Posterior cingulate gyrus (tissue), 11 donors: ENCODE measurements at regions of chr5 and their contacts with region 1.

Region 1: GRCh38 chr5:79464695-79465332 is 49.1 kb downstream of the HOMER1 start:
- DNase-seq: no peak

Region 2: DNA sequence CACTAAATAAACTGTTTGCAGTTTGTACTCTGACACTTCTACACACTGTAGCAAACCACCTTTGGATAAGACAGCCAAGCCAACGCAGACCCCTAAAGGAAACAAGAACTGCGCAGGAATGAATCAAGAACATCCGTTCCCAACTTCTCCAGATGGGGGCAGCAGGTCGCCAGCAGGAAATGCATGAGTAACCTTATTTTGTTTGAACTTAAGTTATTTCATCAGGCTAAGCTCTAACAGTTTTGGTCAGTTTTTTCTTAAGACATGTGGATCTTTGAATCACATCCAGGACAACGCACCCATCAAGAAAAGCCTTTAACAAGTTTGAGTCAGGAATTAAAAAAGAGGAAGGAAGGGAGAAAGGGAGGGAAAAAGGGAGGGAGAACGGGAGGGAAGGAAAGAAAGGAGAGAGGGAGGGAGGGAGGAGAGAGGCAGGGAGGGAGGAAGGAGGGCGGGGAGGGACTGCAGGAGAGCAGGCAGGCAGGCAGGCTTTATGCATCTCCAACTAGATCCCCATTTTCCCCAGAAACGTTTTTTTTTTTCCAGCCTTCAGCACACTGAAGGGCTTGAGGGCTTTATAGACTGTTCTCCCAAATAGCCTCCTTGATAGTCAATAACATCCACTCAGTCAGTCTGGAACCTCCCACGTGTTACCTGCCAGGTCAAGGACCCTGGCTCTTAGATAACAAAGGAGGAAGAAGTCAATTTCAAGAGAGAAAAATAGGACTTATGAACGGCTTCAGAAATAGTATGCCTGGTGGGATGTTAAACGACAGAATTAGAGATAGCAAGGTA is 331.0 kb before region 1 on chr5:
- intact Hi-C with region 1: loop called (anchors 2 kb)
- DNase-seq: peak in 9 of 10 donors; percentile 38 to 90 (median 61)

Region 3: DNA sequence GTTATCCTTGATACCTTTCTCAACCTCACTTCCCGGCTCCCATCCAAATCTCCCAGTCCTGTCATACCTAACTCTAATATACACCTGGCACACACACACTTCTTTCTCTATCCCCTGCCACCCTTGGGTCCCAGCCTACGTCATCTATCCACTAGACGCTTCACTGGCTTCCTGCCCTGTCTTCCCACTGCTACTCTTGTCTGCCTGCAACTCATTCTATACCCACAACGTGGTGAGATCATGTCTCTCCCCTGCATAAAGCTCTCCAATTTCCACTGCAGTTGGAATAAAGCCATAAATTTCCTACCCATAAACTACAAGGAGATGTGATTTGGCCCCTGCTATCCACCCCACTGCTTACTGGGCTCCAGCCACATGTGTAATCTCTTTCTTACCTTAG is 135.4 kb before region 1 on chr5:
- intact Hi-C with region 1: loop called (anchors 10 kb)
- DNase-seq: no peak